ENCODE measurements at regions of chr3 and their contacts with region 1.

Region 1: DNA sequence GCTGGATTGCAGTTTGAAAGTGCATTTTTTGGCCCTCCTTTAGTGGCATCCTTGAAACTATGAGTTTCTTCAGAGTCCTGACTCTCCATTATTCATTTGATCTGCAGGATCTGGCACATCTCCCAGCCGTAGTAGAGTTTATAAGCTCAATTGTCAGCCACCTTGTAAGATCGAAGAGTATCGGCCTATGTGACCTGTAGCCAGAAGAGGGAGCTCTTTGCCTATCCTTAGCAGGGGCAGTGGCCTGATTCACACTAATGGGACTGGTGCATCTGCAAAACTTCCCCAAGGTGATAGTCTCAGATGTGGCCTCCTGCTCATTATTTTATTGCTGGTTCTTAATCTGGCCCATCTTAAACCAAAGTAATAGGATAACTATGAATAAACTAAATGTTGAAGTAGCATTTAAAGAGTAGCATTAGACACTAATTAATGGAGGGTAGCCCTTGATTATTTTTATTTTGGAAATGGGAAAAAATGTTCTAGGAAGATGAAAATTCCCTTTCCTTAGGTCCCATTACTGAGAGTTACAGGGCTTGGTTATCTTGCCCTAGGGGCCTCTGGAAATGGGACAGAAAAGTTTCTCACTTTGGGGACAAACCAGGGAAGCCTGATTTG is 21.2 kb downstream of the GCSAM start:
- DNase-seq: peak; percentile 73
- ATAC-seq: peak; percentile 94
- H3K4me3 Mint-ChIP-seq: no peak overlapping the region
- H3K27ac Mint-ChIP-seq: no peak overlapping the region
- H3K4me1 Mint-ChIP-seq: peaks cover 2% of the 10 kb centered on the region
- H3K27me3 Mint-ChIP-seq: no peaks in the 10 kb centered on the region

Region 2: GRCh38 chr3:112035241-112035640 is 76.7 kb before region 1 on chr3:
- CTCF ChIA-PET with region 1: no interaction called
- POLR2A ChIA-PET with region 1: no interaction called
- DNase-seq: no peak
- ATAC-seq: no peak
- H3K4me3 Mint-ChIP-seq: no peak overlapping the region
- H3K27ac Mint-ChIP-seq: no peak overlapping the region
- H3K4me1 Mint-ChIP-seq: no peaks in the 10 kb centered on the region
- H3K27me3 Mint-ChIP-seq: peaks cover 1% of the 10 kb centered on the region

Region 3: DNA sequence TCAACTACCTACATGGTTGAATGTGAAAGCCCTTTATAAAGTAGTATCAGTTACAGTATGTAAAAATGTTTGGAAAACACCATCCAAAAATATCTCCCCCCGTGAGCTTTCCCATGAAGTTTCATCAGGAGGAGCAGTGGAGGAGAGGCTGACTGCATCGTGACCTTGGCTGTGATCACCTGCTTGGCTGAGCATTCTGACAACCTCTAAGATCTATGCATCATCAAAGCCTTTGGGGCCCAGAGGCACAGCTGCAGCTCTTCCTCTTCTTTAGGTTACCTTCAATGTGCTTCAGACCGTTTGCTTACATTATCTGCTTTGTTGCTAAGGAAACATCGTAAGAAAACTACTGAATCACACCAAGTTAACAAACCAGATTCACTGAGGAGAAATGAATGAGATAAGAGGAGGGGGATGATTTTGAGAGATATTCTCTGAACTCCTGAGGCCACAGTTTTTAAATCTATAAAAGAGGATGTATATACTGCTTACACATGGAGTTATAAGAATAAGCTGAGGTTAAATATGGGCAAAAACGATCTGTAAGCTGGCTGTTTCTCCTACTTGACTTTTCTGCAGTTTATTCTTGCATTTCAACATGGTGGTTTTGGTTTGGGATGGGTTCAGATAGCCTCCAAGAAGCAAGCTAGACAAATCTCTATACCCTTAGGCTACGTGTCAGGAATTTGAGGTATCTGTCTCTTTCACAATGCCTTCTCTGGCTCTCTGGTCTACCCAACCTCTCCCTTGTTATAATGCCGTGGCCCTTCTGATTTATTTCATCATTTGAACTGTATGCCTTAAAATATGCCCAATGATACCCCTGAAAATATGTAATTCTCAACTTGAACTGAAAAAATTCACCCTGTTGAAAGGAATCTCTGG is 17.2 kb after region 1 on chr3:
- CTCF ChIA-PET with region 1: interaction called, 29 read pairs
- POLR2A ChIA-PET with region 1: interaction called, 6 read pairs
- DNase-seq: peak; percentile 66
- ATAC-seq: peak; percentile 78
- H3K4me3 Mint-ChIP-seq: no peak overlapping the region
- H3K27ac Mint-ChIP-seq: peak overlapping the region; percentile 56
- H3K4me1 Mint-ChIP-seq: peaks cover 75% of the 10 kb centered on the region
- H3K27me3 Mint-ChIP-seq: no peaks in the 10 kb centered on the region

Region 4: GRCh38 chr3:112293368-112294321 is 181.8 kb after region 1 on chr3 and contains the start of gene SLC9C1:
- CTCF ChIA-PET with region 1: interaction called, 67 read pairs
- POLR2A ChIA-PET with region 1: no interaction called
- DNase-seq: peak; percentile 68
- ATAC-seq: peak; percentile 74
- H3K4me3 Mint-ChIP-seq: peak within 1 kb of the TSS; percentile 30
- H3K27ac Mint-ChIP-seq: peak within 1 kb of the TSS; percentile 62
- H3K4me1 Mint-ChIP-seq: peaks cover 22% of the 10 kb centered on the region
- H3K27me3 Mint-ChIP-seq: peaks cover 2% of the 10 kb centered on the region
- total RNA-seq, gene SLC9C1: not detected

Region 5: DNA sequence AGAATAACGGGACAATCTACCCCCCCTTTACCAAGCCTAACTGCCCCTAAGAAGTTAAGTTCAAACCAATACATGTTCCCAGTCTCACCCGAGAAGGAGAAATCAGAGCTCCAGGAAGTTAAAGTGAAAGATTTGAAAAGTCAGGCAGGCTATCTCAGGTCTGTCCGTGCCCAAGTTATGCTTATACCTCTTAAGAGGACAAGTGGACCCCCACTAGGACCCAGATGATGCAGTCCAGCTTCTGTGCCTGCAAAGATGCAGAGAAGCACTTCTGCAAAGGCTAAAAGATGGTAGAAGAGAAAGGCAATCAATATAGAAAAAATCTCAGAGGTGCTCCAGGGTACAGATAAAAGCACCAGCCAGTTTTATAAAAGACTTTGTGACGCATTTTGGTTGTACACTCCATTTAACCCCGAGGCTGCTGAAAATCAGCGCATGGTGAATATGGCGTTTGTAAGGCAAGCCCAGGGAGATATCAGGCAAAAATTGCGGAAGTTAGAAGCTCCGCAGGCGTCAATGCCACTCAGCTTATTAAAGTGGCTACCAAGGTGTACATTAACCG is 192.0 kb after region 1 on chr3:
- CTCF ChIA-PET with region 1: interaction called, 16 read pairs
- POLR2A ChIA-PET with region 1: no interaction called
- DNase-seq: no peak
- ATAC-seq: peak; percentile 57
- H3K4me3 Mint-ChIP-seq: no peak overlapping the region
- H3K27ac Mint-ChIP-seq: no peak overlapping the region
- H3K4me1 Mint-ChIP-seq: peaks cover 1% of the 10 kb centered on the region
- H3K27me3 Mint-ChIP-seq: no peaks in the 10 kb centered on the region

Region 6: DNA sequence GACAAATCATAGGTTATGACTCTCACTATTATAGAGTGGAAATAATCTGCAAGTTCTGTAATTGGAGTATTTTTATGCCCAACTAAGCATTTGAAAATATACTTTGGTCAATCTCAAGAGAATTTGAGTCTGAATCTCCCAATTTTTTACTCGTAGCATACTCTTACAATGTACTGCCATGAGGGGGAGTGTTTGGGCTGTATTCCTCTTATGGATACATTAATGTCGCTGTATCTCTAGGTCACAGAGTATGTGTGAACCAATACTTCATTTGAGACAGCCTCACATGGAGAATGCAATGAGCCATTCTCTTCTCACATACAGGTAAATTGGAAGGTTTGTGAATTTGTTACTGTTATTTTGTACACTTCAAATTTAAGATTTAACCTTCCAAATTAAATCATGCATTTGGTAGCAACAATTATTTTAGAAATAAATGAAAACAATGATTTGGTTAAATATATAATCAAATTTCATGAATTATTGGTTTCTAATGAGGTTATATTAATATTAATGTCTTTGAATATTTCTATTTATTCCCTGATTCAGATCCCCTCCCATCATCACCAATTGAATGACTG is 215.6 kb after region 1 on chr3:
- CTCF ChIA-PET with region 1: interaction called, 10 read pairs
- POLR2A ChIA-PET with region 1: no interaction called
- DNase-seq: peak; percentile 70
- ATAC-seq: peak; percentile 99
- H3K4me3 Mint-ChIP-seq: no peak overlapping the region
- H3K27ac Mint-ChIP-seq: no peak overlapping the region
- H3K4me1 Mint-ChIP-seq: peaks cover 4% of the 10 kb centered on the region
- H3K27me3 Mint-ChIP-seq: peaks cover 8% of the 10 kb centered on the region

Region 7: GRCh38 chr3:112531358-112531781 is 419.5 kb after region 1 on chr3:
- CTCF ChIA-PET with region 1: interaction called, 15 read pairs
- POLR2A ChIA-PET with region 1: no interaction called
- DNase-seq: no peak
- ATAC-seq: no peak
- H3K4me3 Mint-ChIP-seq: no peak overlapping the region
- H3K27ac Mint-ChIP-seq: no peak overlapping the region
- H3K4me1 Mint-ChIP-seq: no peaks in the 10 kb centered on the region
- H3K27me3 Mint-ChIP-seq: no peaks in the 10 kb centered on the region

Measured in activated CD8-positive, alpha-beta T cell treated with anti-CD3 and anti-CD28 coated beads, Interleukin-2, amount 10 ng/mL, durations not matched to agents 7 days and 5 days (primary cell).